Ovary (tissue), 10 donors: ENCODE measurements at regions of chr4 and their contacts with region 1.

Region 1: DNA sequence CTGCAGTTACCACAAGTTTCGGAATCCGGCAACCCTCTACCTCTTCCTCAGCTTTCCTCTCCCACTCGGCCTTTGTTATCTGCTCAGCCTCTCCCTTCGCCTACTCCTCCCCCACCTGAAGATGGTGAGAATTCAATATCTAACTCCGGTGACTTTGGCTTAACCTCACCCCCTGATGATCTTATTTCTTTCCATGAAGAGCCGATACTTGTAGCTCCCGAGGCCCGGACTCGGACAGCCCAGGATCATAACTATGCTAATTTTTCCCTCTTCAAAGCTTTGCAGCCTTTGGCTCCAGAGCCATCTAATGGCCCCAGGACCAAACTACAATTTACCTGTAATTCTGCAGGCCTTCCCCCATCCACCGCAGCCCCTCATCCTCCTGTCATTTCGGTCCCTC is 32.0 kb upstream of the MGST2 start:
- DNase-seq: peak in 2 of 5 donors; percentile 20 to 48
- H3K4me3 ChIP-seq: peak overlapping the region; percentile 23
- H3K27ac ChIP-seq: no peak overlapping the region
- H3K4me1 ChIP-seq: no peaks in the 10 kb centered on the region
- H3K27me3 ChIP-seq: no peaks in the 10 kb centered on the region
- CTCF ChIP-seq: peak; percentile 18 to 44 (median 38)
- EP300 ChIP-seq: no peak
- POLR2A ChIP-seq: no peak

Region 2: GRCh38 chr4:139493176-139493575 is 140.5 kb before region 1 on chr4:
- intact Hi-C with region 1: loop called in 2 of 4 experiments (anchors 2 to 10 kb)
- DNase-seq: no peak
- H3K4me3 ChIP-seq: no peak overlapping the region
- H3K27ac ChIP-seq: no peak overlapping the region
- H3K4me1 ChIP-seq: peaks cover 3% of the 10 kb centered on the region
- H3K27me3 ChIP-seq: no peaks in the 10 kb centered on the region
- CTCF ChIP-seq: no peak
- EP300 ChIP-seq: no peak
- POLR2A ChIP-seq: no peak

Region 3: GRCh38 chr4:139501927-139502899 is 131.4 kb before region 1 on chr4:
- intact Hi-C with region 1: loop called in 2 of 4 experiments (anchors 2 to 10 kb)
- DNase-seq: no peak
- H3K4me3 ChIP-seq: no peak overlapping the region
- H3K27ac ChIP-seq: no peak overlapping the region
- H3K4me1 ChIP-seq: peaks cover 3% of the 10 kb centered on the region
- H3K27me3 ChIP-seq: no peaks in the 10 kb centered on the region
- CTCF ChIP-seq: no peak
- EP300 ChIP-seq: no peak
- POLR2A ChIP-seq: no peak